ENCODE measurements at regions of chr7 and their contacts with region 1.

Region 1: GRCh38 chr7:699808-700170 is 26.7 kb upstream of the DNAAF5 start:
- DNase-seq: no peak
- H3K4me3 ChIP-seq: no peak overlapping the region
- H3K27ac ChIP-seq: no peak overlapping the region
- H3K4me1 ChIP-seq: no peaks in the 10 kb centered on the region
- H3K27me3 ChIP-seq: no peaks in the 10 kb centered on the region
- CTCF ChIP-seq: no peak

Region 2: DNA sequence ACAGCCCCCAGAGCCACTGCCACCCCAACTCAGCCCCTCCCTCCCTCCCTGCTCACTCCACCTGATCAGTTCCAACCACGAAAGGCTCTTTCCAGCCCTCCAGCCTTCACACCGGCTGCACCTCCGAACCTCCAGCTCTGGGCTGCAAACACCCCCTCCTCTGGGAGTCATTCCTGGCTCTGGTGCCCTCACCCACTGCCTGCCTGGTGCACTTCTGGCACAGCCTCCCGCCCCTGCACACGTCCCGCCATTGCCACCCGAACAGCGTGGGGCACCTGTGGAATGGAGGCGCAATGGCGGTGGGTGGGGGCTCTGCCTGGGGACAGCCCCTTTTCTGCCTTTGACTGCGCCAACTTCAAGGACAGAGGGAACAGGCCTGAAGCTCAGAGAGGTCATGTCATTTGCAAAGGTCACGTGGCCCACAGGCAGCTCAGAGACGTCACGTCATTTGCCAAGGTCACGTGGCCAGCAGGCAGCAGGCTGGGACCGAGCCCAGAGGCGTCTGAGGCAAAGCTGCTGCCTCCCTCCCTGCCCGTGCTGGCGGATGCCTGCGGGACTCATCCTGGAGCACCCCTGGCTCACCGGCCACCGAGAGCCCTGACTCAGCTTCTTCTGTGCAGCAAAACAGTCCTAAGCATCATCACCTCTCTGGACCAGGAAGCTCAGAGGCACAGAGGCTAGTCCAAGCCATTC is 49.3 kb before region 1 on chr7:
- CTCF ChIA-PET with region 1: no interaction called
- dilution Hi-C with region 1: loop called (anchors 5 kb)
- in situ Hi-C with region 1: no loop called
- intact Hi-C with region 1: no loop called
- DNase-seq: no peak
- H3K4me3 ChIP-seq: no peak overlapping the region
- H3K27ac ChIP-seq: no peak overlapping the region
- H3K4me1 ChIP-seq: no peaks in the 10 kb centered on the region
- H3K27me3 ChIP-seq: no peaks in the 10 kb centered on the region
- CTCF ChIP-seq: no peak

Measured in mammary epithelial cell (primary cell).